Spleen (tissue), 13 donors: ENCODE measurements at regions of chr1 and their contacts with region 1.

Region 1: DNA sequence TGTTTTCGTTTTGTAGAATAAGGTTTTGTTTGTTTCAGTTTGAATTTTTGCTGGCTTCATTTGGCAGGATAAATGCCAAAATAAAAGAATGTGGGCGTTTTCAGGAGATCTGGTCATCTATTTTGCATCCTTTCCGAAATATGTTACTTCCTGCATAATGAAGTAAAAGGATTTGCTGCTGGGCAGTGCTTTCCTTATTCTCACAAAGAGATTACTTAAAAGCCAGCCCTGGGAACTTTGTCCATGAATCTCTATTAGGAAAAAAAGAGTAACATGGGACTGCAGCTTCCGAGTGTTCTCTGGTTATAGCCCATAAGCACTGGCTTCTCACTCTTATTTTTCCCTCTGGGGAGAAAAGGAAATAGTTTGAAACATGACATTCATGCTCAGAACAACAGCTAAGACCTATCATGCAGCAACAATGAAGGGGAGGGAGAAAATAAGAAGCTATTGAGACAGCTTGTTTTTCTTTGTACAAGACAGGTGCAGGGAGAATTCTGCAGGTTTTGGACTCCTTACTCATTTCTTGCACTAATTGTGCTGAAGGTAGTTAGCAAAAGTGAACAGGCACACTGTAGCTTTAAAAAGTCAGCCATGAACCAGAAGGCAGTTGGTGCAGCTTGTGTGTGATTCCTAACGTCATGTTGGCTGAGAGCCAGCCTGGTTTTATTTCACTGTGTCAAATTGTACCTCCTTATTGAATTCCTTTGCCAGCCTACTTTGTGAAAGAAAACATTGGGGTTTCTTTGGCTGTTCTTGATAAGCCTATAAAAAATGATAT is at the start of gene SAMD13:
- DNase-seq: no peak
- H3K4me3 ChIP-seq: peak within 1 kb of the TSS in 7 of 8 donors; percentile 4 to 57 (median 18)
- H3K27ac ChIP-seq: peak within 1 kb of the TSS; percentile 28 to 91 (median 80)
- H3K4me1 ChIP-seq: peaks cover 4 to 70% (median 55%) of the 10 kb centered on the region in 6 donors
- H3K27me3 ChIP-seq: peaks cover 0 to 13% (median 0%) of the 10 kb centered on the region in 7 donors
- CTCF ChIP-seq: no peak
- POLR2A ChIP-seq: no peak
- total RNA-seq, gene SAMD13: 0.72 to 2.8 (median 1.3) TPM

Region 2: GRCh38 chr1:84156210-84156621 is 145.0 kb before region 1 on chr1:
- intact Hi-C with region 1: loop called (anchors 10 kb)
- DNase-seq: no peak
- H3K4me3 ChIP-seq: no peak overlapping the region
- H3K27ac ChIP-seq: no peak overlapping the region
- H3K4me1 ChIP-seq: peaks cover 5 to 94% (median 45%) of the 10 kb centered on the region in 6 donors
- H3K27me3 ChIP-seq: no peaks in the 10 kb centered on the region
- CTCF ChIP-seq: no peak
- POLR2A ChIP-seq: no peak

Region 3: GRCh38 chr1:84192681-84193080 is 108.5 kb before region 1 on chr1:
- intact Hi-C with region 1: no loop called
- DNase-seq: no peak
- H3K4me3 ChIP-seq: no peak overlapping the region
- H3K27ac ChIP-seq: no peak overlapping the region
- H3K4me1 ChIP-seq: no peaks in the 10 kb centered on the region
- H3K27me3 ChIP-seq: no peaks in the 10 kb centered on the region
- CTCF ChIP-seq: no peak
- POLR2A ChIP-seq: no peak